Activated CD4-positive, alpha-beta T cell treated with anti-CD3 and anti-CD28 coated beads, Interleukin-2, amount 10 ng/mL, durations not matched to agents 24 days and 14 days (primary cell): ENCODE measurements at regions of chr10 and their contacts with region 1.

Region 1: GRCh38 chr10:91632671-91633550 is at the start of gene PPP1R3C:
- DNase-seq: peak; percentile 85
- H3K4me3 Mint-ChIP-seq: peak within 1 kb of the TSS; percentile 77
- H3K27ac Mint-ChIP-seq: no peak within 1 kb of the TSS
- H3K4me1 Mint-ChIP-seq: peaks cover 5% of the 10 kb centered on the region
- H3K27me3 Mint-ChIP-seq: peaks cover 54% of the 10 kb centered on the region
- total RNA-seq, gene PPP1R3C: 0.14 and 0.21 TPM in 2 replicates

Region 2: GRCh38 chr10:91298224-91298871 is 334.6 kb before region 1 on chr10:
- intact Hi-C with region 1: loop called (anchors 1 kb)
- DNase-seq: peak; percentile 93
- H3K4me3 Mint-ChIP-seq: peak overlapping the region; percentile 71
- H3K27ac Mint-ChIP-seq: no peak overlapping the region
- H3K4me1 Mint-ChIP-seq: peaks cover 8% of the 10 kb centered on the region
- H3K27me3 Mint-ChIP-seq: peaks cover 22% of the 10 kb centered on the region

Region 3: GRCh38 chr10:91389636-91390512 is 243.0 kb before region 1 on chr10:
- intact Hi-C with region 1: loop called (anchors 1 kb)
- DNase-seq: peak; percentile 78
- H3K4me3 Mint-ChIP-seq: no peak overlapping the region
- H3K27ac Mint-ChIP-seq: peak overlapping the region; percentile 18
- H3K4me1 Mint-ChIP-seq: peaks cover 6% of the 10 kb centered on the region
- H3K27me3 Mint-ChIP-seq: peaks cover 20% of the 10 kb centered on the region

Region 4: DNA sequence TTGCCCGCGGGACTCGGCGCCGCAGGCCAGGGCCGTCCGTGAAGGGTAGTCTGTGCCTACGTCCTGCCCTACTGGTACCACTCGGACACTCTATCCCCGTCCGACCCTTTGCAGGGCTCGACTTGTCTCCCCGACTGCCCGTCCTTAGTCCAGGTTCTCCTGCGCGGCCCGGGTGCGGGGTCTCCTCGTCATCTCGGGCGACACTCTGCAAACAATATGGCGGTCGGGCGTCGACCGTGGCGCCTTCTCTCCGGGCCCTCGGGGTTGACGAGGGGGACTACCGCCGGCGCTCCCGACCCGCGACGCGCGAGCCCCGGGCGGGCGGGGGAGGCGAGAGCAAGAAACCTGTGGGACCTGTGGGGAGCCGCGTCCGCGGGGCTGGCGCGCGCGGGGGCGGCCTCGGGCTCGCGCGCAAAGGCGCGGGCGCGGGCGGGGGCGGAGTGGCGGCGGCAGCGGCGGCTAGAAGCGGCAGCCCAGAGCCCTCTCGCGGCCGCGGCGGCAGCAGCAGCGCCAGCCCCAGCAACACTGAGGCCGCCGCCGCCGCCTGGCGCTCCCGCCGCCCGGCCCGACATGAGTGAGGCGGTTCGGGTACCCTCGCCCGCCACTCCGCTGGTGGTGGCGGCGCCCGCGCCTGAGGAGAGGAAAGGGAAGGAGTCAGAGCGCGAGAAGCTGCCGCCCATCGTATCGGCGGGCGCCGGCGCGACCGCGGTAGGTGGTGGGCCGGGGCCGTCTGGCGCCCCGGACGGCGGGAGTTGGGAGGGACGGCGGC is 222.9 kb before region 1 on chr10 and contains the start of gene HECTD2:
- intact Hi-C with region 1: loop called (anchors 5 kb)
- DNase-seq: peak; percentile 94
- H3K4me3 Mint-ChIP-seq: peak within 1 kb of the TSS; percentile 93
- H3K27ac Mint-ChIP-seq: peak within 1 kb of the TSS; percentile 96
- H3K4me1 Mint-ChIP-seq: peaks cover 17% of the 10 kb centered on the region
- H3K27me3 Mint-ChIP-seq: peaks cover 25% of the 10 kb centered on the region
- total RNA-seq, gene HECTD2: 4.5 and 5.5 TPM in 2 replicates

Region 5: DNA sequence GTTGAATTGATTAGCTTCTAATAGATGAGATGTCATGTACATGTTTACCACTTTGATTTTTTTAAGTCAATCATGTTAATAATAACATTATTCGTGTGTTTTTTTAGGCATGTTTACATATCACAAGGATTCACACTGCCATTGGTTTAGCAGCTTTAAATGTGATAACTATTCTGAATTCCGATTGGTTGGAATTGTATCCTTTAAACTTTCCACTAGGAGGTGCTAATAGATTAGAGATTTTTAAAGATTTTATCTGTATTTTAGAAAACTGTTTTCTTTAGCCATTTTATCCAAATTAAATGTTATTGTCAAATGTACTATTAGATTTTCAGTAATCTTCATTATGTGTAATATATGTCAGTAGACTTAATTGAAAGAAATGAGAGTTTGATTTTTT is 139.6 kb before region 1 on chr10:
- intact Hi-C with region 1: loop called (anchors 5 kb)
- DNase-seq: no peak
- H3K4me3 Mint-ChIP-seq: no peak overlapping the region
- H3K27ac Mint-ChIP-seq: no peak overlapping the region
- H3K4me1 Mint-ChIP-seq: no peaks in the 10 kb centered on the region
- H3K27me3 Mint-ChIP-seq: peaks cover 2% of the 10 kb centered on the region